ENCODE measurements at regions of chr10 and their contacts with region 1.

Region 1: DNA sequence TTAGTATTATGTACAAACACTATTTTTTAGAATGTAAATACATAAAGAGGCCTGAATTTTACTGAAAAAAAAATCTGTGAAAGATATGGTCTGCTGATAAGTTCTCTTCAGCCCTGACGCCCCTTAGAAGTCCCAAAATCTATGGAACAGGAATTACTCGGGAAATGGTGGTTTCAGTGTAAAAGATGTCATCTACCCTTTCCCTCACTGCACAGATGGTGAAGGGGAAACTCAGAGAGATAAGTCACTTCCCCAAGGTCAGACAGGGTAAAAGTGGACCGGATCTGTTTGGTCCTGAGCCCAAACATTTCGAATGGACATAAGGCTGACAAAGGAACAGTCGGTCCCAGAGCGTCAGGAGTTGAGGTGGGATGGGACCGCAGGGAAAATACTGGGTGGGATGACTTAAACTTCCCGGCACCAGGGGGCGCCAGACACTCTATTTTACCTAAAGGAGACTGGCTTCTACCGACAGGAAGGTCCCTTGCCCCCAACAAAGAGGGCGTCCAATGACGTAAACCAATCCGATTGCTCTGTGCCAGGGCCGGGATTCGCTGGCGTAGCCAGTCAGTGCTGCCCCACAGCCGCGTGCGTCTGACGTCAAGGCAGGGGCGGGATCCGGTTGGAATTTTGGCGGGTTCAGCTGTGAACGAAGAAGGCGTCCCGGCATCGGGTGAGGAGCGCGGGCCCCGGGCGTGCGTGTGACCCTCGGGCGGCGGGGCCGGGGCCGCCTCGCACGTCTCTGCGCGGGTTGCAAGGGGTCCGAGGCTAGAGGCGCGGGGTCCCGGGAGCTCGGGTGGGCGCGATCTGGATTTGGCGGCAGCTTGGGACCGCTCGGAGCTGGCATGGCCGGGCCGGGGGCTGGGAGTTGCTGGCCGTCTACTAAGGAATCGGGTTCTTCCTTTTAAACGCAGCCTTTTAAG is at the start of gene MCM10:
- DNase-seq: peak; percentile 97
- ATAC-seq: peak; percentile 100
- total RNA-seq, gene MCM10: 0.30 TPM

Region 2: GRCh38 chr10:13234172-13234571 is 73.0 kb after region 1 on chr10 and contains the start of gene UCMA:
- intact Hi-C with region 1: no loop called
- DNase-seq: no peak
- ATAC-seq: no peak
- total RNA-seq, gene UCMA: not detected

Region 3: DNA sequence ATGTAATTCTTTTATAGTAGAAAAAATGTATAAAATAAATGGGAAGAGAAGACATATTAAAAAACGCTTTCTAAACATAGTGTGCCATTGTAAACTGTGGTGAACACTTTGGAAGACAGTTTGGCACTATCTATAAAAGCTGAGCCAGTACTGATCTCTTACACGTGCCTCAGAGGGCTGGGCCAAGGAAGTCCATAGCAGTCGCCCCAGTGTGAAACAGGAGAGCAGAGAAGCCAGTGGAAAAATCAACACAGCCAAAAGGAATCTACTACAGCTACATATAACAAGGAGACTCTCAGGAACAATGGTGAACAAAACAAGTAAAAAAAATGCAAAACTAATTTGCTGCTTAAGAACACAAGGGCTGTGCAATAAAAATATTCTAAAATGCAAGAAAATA is 166.3 kb after region 1 on chr10:
- intact Hi-C with region 1: no loop called
- DNase-seq: no peak
- ATAC-seq: peak; percentile 91

Region 4: DNA sequence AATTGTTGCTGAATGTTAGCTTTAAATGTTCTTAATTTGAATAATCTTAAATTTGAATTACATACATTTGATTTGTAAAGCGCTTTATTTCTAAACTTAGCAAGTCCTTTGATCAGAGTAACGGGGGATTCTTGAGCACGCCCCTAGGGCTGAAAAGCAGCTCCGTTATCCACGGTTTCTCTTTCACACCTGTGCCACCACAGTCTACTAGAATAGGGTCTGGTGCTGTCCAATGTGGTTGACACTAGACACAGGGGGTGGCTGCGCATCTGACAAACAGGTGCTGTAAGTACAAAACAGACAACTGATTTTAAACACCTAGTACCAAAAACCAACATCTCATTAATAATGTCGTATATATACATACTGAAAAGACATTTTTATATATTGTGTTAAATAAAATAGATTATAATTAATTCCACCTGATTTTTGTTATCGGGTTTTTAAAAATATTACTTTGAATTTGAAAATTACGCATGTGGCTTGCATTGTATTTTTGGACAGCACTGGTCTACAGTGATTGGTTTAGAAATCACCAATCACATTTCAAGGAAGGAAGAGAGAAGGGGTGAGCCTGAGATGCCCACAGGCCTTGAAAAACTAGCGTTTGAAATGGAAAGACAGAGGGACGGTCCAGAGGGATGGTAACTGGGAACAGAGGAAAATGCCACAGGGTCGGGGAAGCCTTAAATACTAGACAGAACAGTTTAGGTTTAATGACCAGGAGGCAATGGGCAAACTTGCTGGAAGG is 179.6 kb after region 1 on chr10:
- intact Hi-C with region 1: no loop called
- DNase-seq: no peak
- ATAC-seq: no peak

Region 5: GRCh38 chr10:13536674-13537366 is 375.6 kb after region 1 on chr10:
- intact Hi-C with region 1: loop called (anchors 10 kb)
- DNase-seq: peak; percentile 55
- ATAC-seq: peak; percentile 79

Region 6: GRCh38 chr10:13556676-13557319 is 395.6 kb after region 1 on chr10:
- intact Hi-C with region 1: no loop called
- DNase-seq: no peak
- ATAC-seq: no peak